ENCODE measurements at regions of chr11 and their contacts with region 1.

Region 1: GRCh38 chr11:130861902-130862860 is 54.1 kb downstream of the SNX19 start:
- DNase-seq: peak; percentile 91
- ATAC-seq: peak; percentile 94
- H3K4me3 Mint-ChIP-seq: no peak overlapping the region
- H3K27ac Mint-ChIP-seq: no peak overlapping the region
- H3K4me1 Mint-ChIP-seq: no peaks in the 10 kb centered on the region
- H3K27me3 Mint-ChIP-seq: peaks cover under 1% of the 10 kb centered on the region

Region 2: DNA sequence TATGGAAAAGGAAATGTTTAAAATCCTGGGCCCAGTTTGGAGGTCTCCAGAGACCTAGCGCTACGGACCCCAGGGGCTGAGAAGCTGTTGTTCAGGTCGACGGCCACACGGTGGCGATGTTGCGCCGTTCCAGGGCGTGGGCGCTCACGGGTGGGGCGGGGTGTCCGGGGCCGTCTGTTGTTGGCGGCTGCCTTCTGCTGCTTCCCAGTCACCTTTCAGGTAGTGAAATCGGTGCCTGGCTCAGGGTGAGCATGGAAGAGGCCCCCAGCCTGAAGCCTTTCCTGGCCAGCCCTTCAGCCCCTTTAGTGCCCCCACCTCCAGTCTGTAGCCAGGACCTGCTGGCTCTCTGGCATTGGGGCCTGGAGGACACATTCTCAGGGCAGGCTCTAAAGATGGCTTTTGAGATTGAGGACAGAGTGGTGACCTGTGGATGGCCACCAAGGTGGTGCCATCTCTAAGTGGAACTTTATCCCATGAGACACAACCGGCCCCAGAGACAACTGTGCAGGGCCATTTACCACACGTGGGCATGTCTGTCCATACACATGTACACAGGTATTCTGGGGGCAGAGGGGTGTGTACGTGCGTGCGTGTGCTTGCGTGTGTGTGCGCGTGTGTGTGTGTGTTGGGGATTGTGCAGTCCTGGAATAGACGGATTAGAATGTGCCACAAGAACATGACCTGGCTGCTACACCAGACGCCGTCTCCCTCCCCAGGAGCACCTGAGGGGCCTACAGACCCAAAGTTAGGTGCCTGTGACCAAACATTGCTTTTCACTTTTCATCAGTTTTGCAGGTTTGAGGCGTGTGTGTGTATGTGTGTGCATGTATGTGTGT is 648.8 kb before region 1 on chr11:
- CTCF ChIA-PET with region 1: interaction called, 12 read pairs
- DNase-seq: peak; percentile 73
- ATAC-seq: peak; percentile 91
- H3K4me3 Mint-ChIP-seq: no peak overlapping the region
- H3K27ac Mint-ChIP-seq: no peak overlapping the region
- H3K4me1 Mint-ChIP-seq: no peaks in the 10 kb centered on the region
- H3K27me3 Mint-ChIP-seq: peaks cover 7% of the 10 kb centered on the region

Region 3: GRCh38 chr11:130445788-130446187 is 416.4 kb before region 1 on chr11:
- CTCF ChIA-PET with region 1: interaction called, 286 read pairs
- DNase-seq: no peak
- ATAC-seq: no peak
- H3K4me3 Mint-ChIP-seq: no peak overlapping the region
- H3K27ac Mint-ChIP-seq: no peak overlapping the region
- H3K4me1 Mint-ChIP-seq: peaks cover 9% of the 10 kb centered on the region
- H3K27me3 Mint-ChIP-seq: peaks cover 67% of the 10 kb centered on the region

Region 4: GRCh38 chr11:130847517-130847916 is 14.7 kb before region 1 on chr11:
- CTCF ChIA-PET with region 1: interaction called, 15 read pairs
- DNase-seq: no peak
- ATAC-seq: no peak
- H3K4me3 Mint-ChIP-seq: no peak overlapping the region
- H3K27ac Mint-ChIP-seq: no peak overlapping the region
- H3K4me1 Mint-ChIP-seq: no peaks in the 10 kb centered on the region
- H3K27me3 Mint-ChIP-seq: peaks cover 7% of the 10 kb centered on the region

Region 5: DNA sequence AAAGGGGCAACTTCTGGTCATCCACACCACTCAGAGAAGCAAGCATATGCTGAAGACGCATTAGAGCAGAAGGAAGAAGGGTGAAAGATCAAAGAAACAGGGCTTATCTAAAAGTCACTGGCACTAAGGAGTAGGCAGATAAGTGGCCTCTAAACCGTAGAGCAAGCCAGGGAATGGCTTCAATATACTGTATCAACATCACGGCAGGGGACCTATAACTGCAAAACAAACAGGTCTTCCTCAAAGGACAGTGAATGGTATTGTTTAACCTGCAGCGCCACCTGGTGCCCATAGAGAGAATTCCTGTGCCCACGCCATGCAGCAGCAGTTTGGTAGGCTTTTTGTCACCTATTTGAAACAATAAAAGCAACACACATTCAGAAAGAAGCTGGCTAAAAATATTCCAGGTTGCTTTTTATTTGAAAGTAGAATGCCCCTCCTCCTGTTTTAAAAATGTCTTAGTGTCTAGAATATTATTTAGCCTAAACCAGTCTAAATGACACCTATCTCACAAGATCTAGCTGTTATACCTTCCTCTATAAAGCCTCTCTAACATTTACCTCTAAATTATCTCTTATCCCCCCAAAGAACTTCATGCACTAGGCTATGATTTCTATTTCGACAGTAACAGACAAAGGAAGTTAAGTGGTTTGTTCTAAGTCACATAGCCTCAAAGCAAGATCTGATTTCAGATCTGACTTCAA is 32.3 kb after region 1 on chr11:
- CTCF ChIA-PET with region 1: interaction called, 21 read pairs
- DNase-seq: peak; percentile 77
- ATAC-seq: peak; percentile 91
- H3K4me3 Mint-ChIP-seq: no peak overlapping the region
- H3K27ac Mint-ChIP-seq: no peak overlapping the region
- H3K4me1 Mint-ChIP-seq: peaks cover 5% of the 10 kb centered on the region
- H3K27me3 Mint-ChIP-seq: no peaks in the 10 kb centered on the region

Measured in activated CD8-positive, alpha-beta memory T cell treated with anti-CD3 and anti-CD28 coated beads, Interleukin-2, amount 10 ng/mL, durations not matched to agents 7 days and 5 days (primary cell).